Caki2 (cell line): ENCODE measurements at regions of chr22 and their contacts with region 1.

Region 1: GRCh38 chr22:36775964-36776669 is at the start of gene IFT27:
- DNase-seq: peak; percentile 100
- total RNA-seq, gene IFT27: 83.8 and 101 TPM in 2 replicates

Region 2: DNA sequence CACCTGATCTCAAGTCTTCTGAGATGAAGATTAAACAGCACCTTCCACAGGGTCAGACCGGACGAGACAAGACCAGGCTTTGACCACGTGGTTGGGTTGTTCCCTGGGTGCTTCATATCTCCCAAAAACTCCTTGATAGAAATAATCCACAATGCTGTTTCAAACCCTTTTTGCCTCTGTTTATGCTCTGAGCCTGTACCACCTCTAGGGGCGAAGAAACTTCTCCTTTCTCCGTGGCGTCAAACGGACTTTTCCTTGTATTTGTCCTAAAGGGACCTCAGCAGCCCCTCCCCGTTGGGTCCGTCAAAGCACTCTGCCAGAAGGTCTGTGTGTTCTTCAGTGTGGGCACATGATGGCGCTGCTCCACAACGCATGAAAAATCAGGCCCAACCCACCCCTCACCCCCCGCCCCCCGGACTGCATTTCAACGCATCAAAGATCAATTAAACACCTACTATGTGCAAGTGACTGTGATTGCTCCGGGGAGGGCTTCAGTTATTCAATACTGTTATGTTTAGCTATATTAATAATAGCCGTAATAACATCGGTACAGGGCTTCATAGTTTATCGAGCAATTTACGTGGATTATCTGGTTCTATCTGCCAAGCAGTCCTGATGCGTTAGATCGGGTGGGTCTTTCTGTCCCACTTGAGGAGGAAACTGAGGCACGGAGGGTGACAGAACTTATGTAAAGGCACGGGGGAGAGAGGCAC is 229.9 kb before region 1 on chr22:
- in situ Hi-C with region 1: loop called (anchors 10 kb)
- DNase-seq: peak; percentile 61

Region 3: GRCh38 chr22:36725356-36726006 is 50.6 kb before region 1 on chr22:
- in situ Hi-C with region 1: loop called (anchors 10 kb)
- DNase-seq: no peak

Region 4: GRCh38 chr22:36808761-36809224 is 32.7 kb after region 1 on chr22:
- in situ Hi-C with region 1: no loop called
- DNase-seq: no peak

Region 5: GRCh38 chr22:36839356-36840073 is 63.4 kb after region 1 on chr22:
- in situ Hi-C with region 1: loop called (anchors 10 kb)
- DNase-seq: no peak